PC-9 (cell line): ENCODE measurements at regions of chr6 and their contacts with region 1.

Region 1: GRCh38 chr6:149170564-149171452 is 146.7 kb upstream of the TAB2 start:
- DNase-seq: no peak
- H3K4me3 ChIP-seq: no peak overlapping the region
- H3K27ac ChIP-seq: peak overlapping the region; percentile 78
- H3K4me1 ChIP-seq: peaks cover 34% of the 10 kb centered on the region
- H3K27me3 ChIP-seq: no peaks in the 10 kb centered on the region
- CTCF ChIP-seq: no peak

Region 2: GRCh38 chr6:149118737-149119653 is 51.8 kb before region 1 on chr6:
- CTCF ChIA-PET with region 1: no interaction called
- POLR2A ChIA-PET with region 1: no interaction called
- intact Hi-C with region 1: no loop called
- DNase-seq: no peak
- H3K4me3 ChIP-seq: no peak overlapping the region
- H3K27ac ChIP-seq: no peak overlapping the region
- H3K4me1 ChIP-seq: 0 out of 2 replicates have a peak, but pooled peaks cover 8% of the 10 kb centered on the region
- H3K27me3 ChIP-seq: no peaks in the 10 kb centered on the region
- CTCF ChIP-seq: no peak

Region 3: GRCh38 chr6:149217466-149217888 is 46.7 kb after region 1 on chr6:
- CTCF ChIA-PET with region 1: no interaction called
- POLR2A ChIA-PET with region 1: no interaction called
- intact Hi-C with region 1: loop called (anchors 5 kb)
- DNase-seq: no peak
- H3K4me3 ChIP-seq: no peak overlapping the region
- H3K27ac ChIP-seq: no peak overlapping the region
- H3K4me1 ChIP-seq: no peaks in the 10 kb centered on the region
- H3K27me3 ChIP-seq: no peaks in the 10 kb centered on the region
- CTCF ChIP-seq: no peak

Region 4: GRCh38 chr6:149316798-149317655 is 146.2 kb after region 1 on chr6:
- CTCF ChIA-PET with region 1: no interaction called
- POLR2A ChIA-PET with region 1: interaction called, 18 read pairs
- intact Hi-C with region 1: no loop called
- DNase-seq: peak; percentile 74 to 78
- H3K4me3 ChIP-seq: peak overlapping the region; percentile 98
- H3K27ac ChIP-seq: peak overlapping the region; percentile 75
- H3K4me1 ChIP-seq: peaks cover 34% of the 10 kb centered on the region
- H3K27me3 ChIP-seq: no peaks in the 10 kb centered on the region
- CTCF ChIP-seq: no peak

Region 5: GRCh38 chr6:150093397-150093796 is 922.6 kb after region 1 on chr6:
- CTCF ChIA-PET with region 1: no interaction called
- POLR2A ChIA-PET with region 1: no interaction called
- intact Hi-C with region 1: no loop called
- DNase-seq: no peak
- H3K4me3 ChIP-seq: no peak overlapping the region
- H3K27ac ChIP-seq: no peak overlapping the region
- H3K4me1 ChIP-seq: no peaks in the 10 kb centered on the region
- H3K27me3 ChIP-seq: no peaks in the 10 kb centered on the region
- CTCF ChIP-seq: no peak